ENCODE measurements at regions of chr2 and their contacts with region 1.

Region 1: DNA sequence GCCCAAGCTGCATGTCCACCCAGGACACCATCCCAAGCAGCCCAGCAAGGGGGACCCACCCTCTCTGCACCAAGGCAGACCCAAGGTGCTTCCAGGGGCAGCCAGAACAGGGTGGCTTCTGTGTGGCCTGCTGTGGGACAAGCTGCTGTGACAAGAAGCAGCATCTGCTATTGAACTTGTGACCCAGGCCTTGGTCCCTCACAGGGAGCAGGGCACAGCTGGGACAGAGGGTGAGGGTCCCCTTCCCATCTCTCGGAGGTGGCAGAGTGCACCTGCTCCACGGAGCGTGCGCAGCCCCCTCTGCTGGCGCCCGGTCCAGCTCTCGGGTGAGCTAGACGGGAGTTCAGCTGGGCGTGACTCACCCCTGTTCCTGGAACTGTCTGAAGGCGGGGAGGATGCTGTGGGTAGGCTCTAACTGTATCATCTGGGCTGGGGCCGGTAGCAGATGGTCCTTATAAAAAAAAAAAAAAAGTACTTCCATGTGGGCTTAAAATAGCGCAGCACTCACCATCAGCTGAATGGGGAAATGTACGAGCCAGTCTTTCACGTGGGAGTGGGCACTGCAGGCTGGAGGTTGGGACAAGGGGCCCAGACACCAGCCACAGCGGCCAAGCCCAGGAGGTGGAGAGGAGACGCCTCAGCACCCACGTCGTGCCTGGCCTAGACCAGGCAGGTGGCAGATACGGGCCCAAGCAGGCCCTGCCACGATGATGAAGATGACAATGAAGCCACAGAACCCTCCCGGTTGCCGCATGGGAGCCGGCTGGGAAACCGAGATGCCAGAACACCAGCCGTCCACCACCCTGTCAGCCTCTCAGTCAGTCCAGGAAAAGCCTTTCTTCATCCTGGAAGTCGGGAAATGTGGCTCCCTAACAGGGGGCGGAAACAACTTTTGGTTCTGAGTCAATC is 136.8 kb upstream of the ID2 start:
- DNase-seq: peak; percentile 97
- H3K4me3 Mint-ChIP-seq: peak overlapping the region; percentile 10
- H3K27ac Mint-ChIP-seq: peak overlapping the region; percentile 97
- H3K4me1 Mint-ChIP-seq: peaks cover 67% of the 10 kb centered on the region
- H3K27me3 Mint-ChIP-seq: no peaks in the 10 kb centered on the region

Region 2: DNA sequence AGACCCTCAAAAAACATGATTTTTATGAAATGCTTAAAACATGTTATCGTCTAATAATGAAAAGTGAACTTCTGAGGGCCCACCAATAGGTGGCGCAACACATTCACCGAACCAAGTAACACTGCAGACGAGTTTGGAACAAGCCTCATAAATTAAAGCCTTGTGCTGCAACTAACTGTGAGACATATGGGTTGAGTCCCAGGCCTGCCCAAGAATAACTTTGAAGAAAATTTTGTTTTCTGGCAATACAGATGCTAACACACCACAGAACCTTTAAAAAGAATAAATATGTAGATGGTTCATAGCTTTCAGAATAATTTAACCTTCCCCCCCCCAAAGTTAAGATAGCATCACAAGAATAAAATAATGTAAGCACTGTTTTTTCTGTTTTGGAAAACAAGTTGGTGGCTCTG is 1342.0 kb before region 1 on chr2:
- CTCF ChIA-PET with region 1: no interaction called
- intact Hi-C with region 1: loop called (anchors 10 kb)
- DNase-seq: peak; percentile 77
- H3K4me3 Mint-ChIP-seq: no peak overlapping the region
- H3K27ac Mint-ChIP-seq: no peak overlapping the region
- H3K4me1 Mint-ChIP-seq: no peaks in the 10 kb centered on the region
- H3K27me3 Mint-ChIP-seq: no peaks in the 10 kb centered on the region

Region 3: GRCh38 chr2:7845332-7845731 is 699.7 kb before region 1 on chr2:
- CTCF ChIA-PET with region 1: no interaction called
- intact Hi-C with region 1: loop called (anchors 2 kb)
- DNase-seq: no peak
- H3K4me3 Mint-ChIP-seq: no peak overlapping the region
- H3K27ac Mint-ChIP-seq: no peak overlapping the region
- H3K4me1 Mint-ChIP-seq: peaks cover 19% of the 10 kb centered on the region
- H3K27me3 Mint-ChIP-seq: peaks cover 5% of the 10 kb centered on the region

Region 4: GRCh38 chr2:8022908-8023640 is 522.0 kb before region 1 on chr2:
- CTCF ChIA-PET with region 1: no interaction called
- intact Hi-C with region 1: no loop called
- DNase-seq: peak; percentile 20
- H3K4me3 Mint-ChIP-seq: no peak overlapping the region
- H3K27ac Mint-ChIP-seq: no peak overlapping the region
- H3K4me1 Mint-ChIP-seq: peaks cover 9% of the 10 kb centered on the region
- H3K27me3 Mint-ChIP-seq: peaks cover 8% of the 10 kb centered on the region

Region 5: GRCh38 chr2:8239531-8240088 is 305.4 kb before region 1 on chr2:
- CTCF ChIA-PET with region 1: interaction called, 5 read pairs
- intact Hi-C with region 1: loop called (anchors 2 kb)
- DNase-seq: peak; percentile 75
- H3K4me3 Mint-ChIP-seq: no peak overlapping the region
- H3K27ac Mint-ChIP-seq: no peak overlapping the region
- H3K4me1 Mint-ChIP-seq: peaks cover 18% of the 10 kb centered on the region
- H3K27me3 Mint-ChIP-seq: peaks cover 22% of the 10 kb centered on the region

Region 6: DNA sequence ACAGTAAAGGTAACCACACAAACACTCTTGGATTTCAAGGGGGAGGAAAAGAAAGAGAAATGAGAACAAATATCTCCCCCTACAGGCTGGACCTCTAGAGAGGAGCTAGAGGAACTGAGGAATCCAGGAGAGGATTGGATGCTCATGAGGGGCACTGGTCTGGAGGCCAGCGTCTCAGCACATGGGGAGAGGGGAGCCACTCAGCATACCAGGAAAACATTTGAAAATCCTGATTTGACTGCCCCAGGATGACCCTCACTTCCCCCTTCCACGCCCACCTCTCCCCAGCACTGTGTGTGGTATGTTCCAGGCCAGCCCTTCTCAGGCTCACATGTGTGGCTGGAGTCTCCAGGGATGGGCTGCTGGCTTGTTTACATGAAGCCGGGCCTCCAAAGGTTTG is 260.0 kb before region 1 on chr2:
- CTCF ChIA-PET with region 1: no interaction called
- intact Hi-C with region 1: no loop called
- DNase-seq: no peak
- H3K4me3 Mint-ChIP-seq: no peak overlapping the region
- H3K27ac Mint-ChIP-seq: no peak overlapping the region
- H3K4me1 Mint-ChIP-seq: peaks cover 3% of the 10 kb centered on the region
- H3K27me3 Mint-ChIP-seq: no peaks in the 10 kb centered on the region

Region 7: DNA sequence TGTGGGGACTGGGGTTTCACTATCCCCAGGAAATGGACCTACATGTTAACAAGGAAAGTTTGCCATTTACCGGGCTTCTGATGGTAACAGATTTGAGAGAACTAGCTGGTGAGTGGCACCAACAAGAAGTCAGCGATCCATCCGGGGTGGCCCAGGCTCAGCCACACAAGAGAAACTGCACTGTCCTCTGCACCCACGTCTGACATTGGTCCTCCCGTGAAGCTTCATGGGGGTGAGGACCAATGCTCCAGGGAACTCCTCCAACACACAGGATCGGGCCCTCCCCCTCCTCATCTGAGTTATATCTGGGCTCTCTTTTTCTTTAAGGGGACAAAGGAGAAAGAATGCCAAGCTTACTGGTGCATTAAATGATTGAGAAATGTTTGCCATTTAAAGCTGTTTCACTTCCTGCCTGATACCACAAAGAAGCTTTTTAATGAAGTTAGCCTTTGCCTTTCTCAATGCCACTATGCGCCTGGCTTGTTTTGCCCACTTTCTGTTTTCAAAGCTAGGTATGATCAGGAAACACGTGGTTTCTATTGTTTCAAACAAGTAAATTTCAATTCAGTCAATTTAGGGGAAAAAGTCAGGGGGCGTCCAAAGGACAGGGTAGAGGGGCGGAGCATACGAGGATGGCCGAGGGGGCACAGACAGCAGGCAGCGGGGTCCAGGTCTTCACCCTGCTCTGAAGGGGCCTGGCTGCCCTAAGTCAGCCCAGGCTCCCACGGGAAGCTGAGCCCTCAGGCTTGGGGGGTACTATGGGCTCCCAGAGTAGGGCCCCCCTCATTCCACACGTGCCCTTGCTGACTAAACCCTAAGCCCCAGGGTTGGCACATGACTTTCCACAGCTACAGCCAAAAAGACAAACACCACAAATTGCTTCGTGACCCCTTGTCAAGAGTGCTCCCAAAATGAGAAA is 67.2 kb before region 1 on chr2:
- CTCF ChIA-PET with region 1: interaction called, 6 read pairs
- intact Hi-C with region 1: loop called (anchors 2 kb)
- DNase-seq: peak; percentile 54
- H3K4me3 Mint-ChIP-seq: no peak overlapping the region
- H3K27ac Mint-ChIP-seq: peak overlapping the region; percentile 31
- H3K4me1 Mint-ChIP-seq: peaks cover 65% of the 10 kb centered on the region
- H3K27me3 Mint-ChIP-seq: no peaks in the 10 kb centered on the region

Region 8: GRCh38 chr2:8608411-8608954 is 63.4 kb after region 1 on chr2:
- CTCF ChIA-PET with region 1: no interaction called
- intact Hi-C with region 1: loop called (anchors 1 kb)
- DNase-seq: peak; percentile 49
- H3K4me3 Mint-ChIP-seq: no peak overlapping the region
- H3K27ac Mint-ChIP-seq: no peak overlapping the region
- H3K4me1 Mint-ChIP-seq: peaks cover 9% of the 10 kb centered on the region
- H3K27me3 Mint-ChIP-seq: no peaks in the 10 kb centered on the region

Region 9: GRCh38 chr2:8857709-8858108 is 312.7 kb after region 1 on chr2:
- CTCF ChIA-PET with region 1: no interaction called
- intact Hi-C with region 1: no loop called
- DNase-seq: no peak
- H3K4me3 Mint-ChIP-seq: no peak overlapping the region
- H3K27ac Mint-ChIP-seq: no peak overlapping the region
- H3K4me1 Mint-ChIP-seq: no peaks in the 10 kb centered on the region
- H3K27me3 Mint-ChIP-seq: peaks cover 1% of the 10 kb centered on the region

Region 10: DNA sequence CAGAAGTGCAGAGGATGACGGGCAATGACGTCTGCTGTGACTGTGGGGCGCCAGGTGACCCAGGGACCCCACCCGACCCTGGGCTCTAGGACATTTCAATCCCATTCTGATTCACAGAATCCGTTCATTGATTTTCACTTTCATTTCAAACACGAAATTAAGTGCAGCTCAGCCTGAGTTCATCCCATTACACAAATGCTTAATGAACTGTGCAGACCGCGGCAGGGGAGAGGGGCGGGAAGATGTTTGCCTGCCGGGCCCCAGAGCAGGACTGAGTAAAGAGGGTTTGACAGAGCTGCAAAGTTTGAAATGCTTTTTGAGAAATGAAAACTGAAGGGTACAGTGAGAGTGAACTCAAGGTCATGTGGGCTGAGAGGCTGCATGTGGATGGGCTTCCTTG is 811.3 kb after region 1 on chr2:
- CTCF ChIA-PET with region 1: no interaction called
- intact Hi-C with region 1: no loop called
- DNase-seq: no peak
- H3K4me3 Mint-ChIP-seq: no peak overlapping the region
- H3K27ac Mint-ChIP-seq: no peak overlapping the region
- H3K4me1 Mint-ChIP-seq: no peaks in the 10 kb centered on the region
- H3K27me3 Mint-ChIP-seq: peaks cover 8% of the 10 kb centered on the region